ENCODE measurements at regions of chr1 and their contacts with region 1.

Region 1: DNA sequence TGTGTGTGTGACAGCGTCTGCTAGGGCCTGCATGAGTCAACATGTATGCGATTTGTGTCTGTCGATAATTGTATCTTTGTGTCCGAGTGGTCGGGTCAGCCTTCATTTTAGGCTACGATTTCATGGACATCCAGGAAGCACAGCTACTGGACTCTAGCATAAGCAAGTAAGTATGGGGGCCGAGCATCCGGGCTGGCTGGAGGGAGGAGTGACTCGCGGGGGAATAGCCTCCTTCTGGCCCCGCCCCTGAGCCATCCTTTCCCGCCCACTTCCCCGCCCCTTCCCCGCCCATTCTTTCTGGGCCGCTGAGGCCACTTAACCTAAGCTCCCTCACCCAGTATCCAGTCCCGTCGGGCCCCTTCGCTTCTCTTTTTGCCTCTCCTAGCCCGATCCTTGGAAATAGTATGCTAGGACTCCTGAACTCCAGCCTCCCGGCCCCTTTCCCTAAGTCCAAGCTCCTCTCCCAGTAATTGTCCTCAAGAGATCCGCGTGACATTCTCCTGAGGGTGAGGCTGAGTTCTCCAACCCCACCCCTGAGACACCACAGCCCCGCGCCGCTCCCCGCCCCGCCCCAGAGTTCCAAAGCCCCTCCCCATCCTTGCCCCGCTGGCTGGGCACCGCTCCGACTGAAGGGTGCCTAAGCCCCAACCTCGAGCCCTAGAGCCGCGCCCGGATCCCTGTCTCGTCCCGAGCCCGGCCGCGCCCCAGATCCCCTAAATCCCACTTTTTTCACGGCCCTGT is 1.2 kb downstream of the MAP3K6 start:
- DNase-seq: peak; percentile 79
- ATAC-seq: peak; percentile 61
- H3K4me3 ChIP-seq: peak overlapping the region; percentile 89
- H3K27ac ChIP-seq: peak overlapping the region; percentile 55
- H3K4me1 ChIP-seq: peaks cover 13% of the 10 kb centered on the region
- H3K27me3 ChIP-seq: no peaks in the 10 kb centered on the region
- CTCF ChIP-seq: no peak

Region 2: GRCh38 chr1:27300341-27301051 is 65.0 kb before region 1 on chr1:
- CTCF ChIA-PET with region 1: interaction called, 11 read pairs
- POLR2A ChIA-PET with region 1: no interaction called
- intact Hi-C with region 1: no loop called
- DNase-seq: peak; percentile 90
- ATAC-seq: peak; percentile 62
- H3K4me3 ChIP-seq: no peak overlapping the region
- H3K27ac ChIP-seq: peak overlapping the region; percentile 85
- H3K4me1 ChIP-seq: peaks cover 21% of the 10 kb centered on the region
- H3K27me3 ChIP-seq: no peaks in the 10 kb centered on the region
- CTCF ChIP-seq: peak; percentile 92

Region 3: DNA sequence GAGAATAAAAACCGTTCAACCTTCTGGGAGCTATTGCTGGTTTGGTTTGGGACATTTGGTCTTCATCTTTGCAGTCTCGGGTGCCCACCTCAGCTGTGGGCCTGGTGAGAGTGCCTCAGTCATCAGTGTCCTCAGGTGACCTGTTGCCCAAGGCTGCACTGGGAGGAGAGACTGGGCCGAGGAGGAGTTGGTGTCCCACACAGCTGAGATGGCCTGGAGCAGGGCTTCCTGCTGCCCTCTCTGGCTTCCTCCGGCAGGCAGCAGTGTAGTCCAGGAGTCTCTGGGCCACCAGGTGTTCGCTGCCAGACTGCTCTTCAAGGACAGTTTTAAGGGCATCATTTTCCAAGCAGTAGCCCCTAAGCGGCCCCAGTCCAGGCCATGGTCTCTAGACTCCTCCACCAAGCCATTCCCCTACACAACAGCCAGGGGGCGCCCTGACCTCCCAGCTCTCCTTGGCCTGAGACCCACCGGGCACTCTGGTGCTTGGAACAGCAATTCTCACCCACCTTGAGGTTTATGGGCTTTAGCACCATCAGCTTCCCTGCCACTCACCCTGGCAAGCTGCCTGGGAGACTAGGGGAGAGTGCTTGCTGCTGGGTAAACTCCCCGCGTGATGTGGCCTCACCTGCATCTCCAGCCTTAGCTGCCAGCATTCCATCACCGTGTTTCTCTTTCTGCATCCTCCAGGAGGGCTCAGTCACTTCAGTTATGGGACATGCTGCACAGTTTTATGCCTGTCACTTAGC is 32.8 kb before region 1 on chr1:
- CTCF ChIA-PET with region 1: interaction called, 12 read pairs
- POLR2A ChIA-PET with region 1: no interaction called
- intact Hi-C with region 1: no loop called
- DNase-seq: no peak
- ATAC-seq: peak; percentile 57; the same call in 1 of the 2 replicates
- H3K4me3 ChIP-seq: no peak overlapping the region
- H3K27ac ChIP-seq: no peak overlapping the region
- H3K4me1 ChIP-seq: no peaks in the 10 kb centered on the region
- H3K27me3 ChIP-seq: no peaks in the 10 kb centered on the region
- CTCF ChIP-seq: peak; percentile 86

Region 4: GRCh38 chr1:27349784-27350662 is 15.5 kb before region 1 on chr1:
- CTCF ChIA-PET with region 1: no interaction called
- POLR2A ChIA-PET with region 1: interaction called, 11 read pairs
- intact Hi-C with region 1: no loop called
- DNase-seq: peak; percentile 79
- ATAC-seq: peak; percentile 86
- H3K4me3 ChIP-seq: peak overlapping the region; percentile 71
- H3K27ac ChIP-seq: peak overlapping the region; percentile 40
- H3K4me1 ChIP-seq: peaks cover 16% of the 10 kb centered on the region
- H3K27me3 ChIP-seq: no peaks in the 10 kb centered on the region
- CTCF ChIP-seq: no peak

Measured in PC-3 (cell line).